ENCODE measurements at regions of chr17 and their contacts with region 1.

Region 1: DNA sequence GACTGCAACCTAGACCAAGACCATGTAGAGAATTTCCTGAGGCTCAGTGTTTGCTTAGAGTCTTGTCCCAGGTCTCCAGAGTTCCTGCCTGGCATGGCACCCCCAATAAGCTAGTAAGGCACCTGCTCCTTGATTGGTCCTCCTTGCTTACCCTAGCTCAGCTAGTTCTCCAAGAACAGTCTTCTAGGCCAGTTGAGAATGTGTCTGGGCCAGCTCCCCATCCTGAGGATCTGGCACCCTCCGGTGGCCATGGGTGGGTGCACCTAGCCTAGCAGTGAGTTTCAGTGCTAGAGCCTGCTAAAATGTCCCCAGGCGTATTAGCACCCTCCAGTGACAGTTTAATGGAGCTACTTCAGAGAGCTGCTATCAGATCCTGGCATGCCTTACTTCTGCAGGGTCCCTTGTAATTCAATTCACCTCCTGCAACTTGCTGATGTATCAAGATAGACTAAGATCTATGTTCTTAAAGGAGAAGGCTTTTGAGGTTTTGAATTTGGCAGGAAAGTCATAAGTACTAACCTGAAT is 44.4 kb upstream of the MED13 start:
- DNase-seq: peak; percentile 82
- ATAC-seq: peak; percentile 98
- H3K4me3 ChIP-seq: no peak overlapping the region
- H3K27ac ChIP-seq: no peak overlapping the region
- H3K4me1 ChIP-seq: peaks cover 4% of the 10 kb centered on the region; the same call in 1 of the 2 replicates
- H3K27me3 ChIP-seq: no peaks in the 10 kb centered on the region
- CTCF ChIP-seq: peak; percentile 90

Region 2: GRCh38 chr17:61770752-61771533 is 338.5 kb before region 1 on chr17:
- CTCF ChIA-PET with region 1: no interaction called
- POLR2A ChIA-PET with region 1: interaction called, 10 read pairs
- in situ Hi-C with region 1: no loop called
- intact Hi-C with region 1: no loop called
- DNase-seq: no peak
- ATAC-seq: no peak
- H3K4me3 ChIP-seq: no peak overlapping the region
- H3K27ac ChIP-seq: no peak overlapping the region
- H3K4me1 ChIP-seq: no peaks in the 10 kb centered on the region
- H3K27me3 ChIP-seq: no peaks in the 10 kb centered on the region
- CTCF ChIP-seq: no peak

Region 3: GRCh38 chr17:61833536-61834193 is 275.8 kb before region 1 on chr17:
- CTCF ChIA-PET with region 1: no interaction called
- POLR2A ChIA-PET with region 1: no interaction called
- in situ Hi-C with region 1: no loop called
- intact Hi-C with region 1: no loop called
- DNase-seq: peak; percentile 10
- ATAC-seq: peak; percentile 81
- H3K4me3 ChIP-seq: no peak overlapping the region
- H3K27ac ChIP-seq: no peak overlapping the region
- H3K4me1 ChIP-seq: peaks cover 12% of the 10 kb centered on the region; the same call in 1 of the 2 replicates
- H3K27me3 ChIP-seq: no peaks in the 10 kb centered on the region
- CTCF ChIP-seq: no peak

Region 4: DNA sequence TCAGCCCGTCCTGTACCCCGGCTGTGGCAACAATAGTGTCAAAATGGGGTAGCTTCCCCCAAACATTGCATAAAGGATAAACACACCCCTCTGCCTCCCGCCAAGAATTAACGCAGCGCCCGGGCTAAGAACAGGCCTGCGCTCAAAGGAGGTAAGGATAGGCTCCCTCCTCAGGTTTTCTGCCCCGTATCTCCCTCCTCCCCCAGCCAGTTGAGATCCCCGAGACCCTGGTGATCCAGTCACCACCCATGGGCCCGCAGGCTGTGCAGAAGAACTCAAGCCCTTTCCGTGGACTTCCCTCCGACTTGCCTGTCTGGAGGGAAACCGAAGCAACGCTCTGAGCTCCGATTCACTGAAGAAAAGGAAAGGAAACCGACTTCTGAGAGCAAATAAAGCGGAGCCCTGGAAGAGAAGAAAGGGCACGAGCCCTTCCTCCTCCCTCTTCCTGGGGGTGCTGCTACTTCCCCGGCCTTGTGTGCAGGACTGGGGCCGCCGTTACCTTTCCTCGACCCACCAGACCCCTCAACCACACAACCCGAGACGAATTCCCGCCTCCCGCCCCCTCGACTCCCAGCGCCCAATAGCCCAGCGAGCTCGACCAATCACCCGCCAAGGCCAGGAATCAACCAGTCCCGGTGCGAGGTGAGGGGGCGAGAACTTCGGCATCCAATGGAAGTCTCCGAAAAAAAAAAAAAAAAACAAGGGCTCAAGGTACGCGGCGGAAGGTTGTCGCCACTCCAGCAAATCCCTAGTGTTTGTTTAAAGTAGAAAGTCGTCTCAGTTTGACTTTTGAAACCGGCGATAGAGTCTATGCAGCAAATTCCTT is 246.3 kb before region 1 on chr17 and contains the start of gene BRIP1:
- CTCF ChIA-PET with region 1: interaction called, 20 read pairs
- POLR2A ChIA-PET with region 1: interaction called, 4 read pairs
- in situ Hi-C with region 1: no loop called
- intact Hi-C with region 1: no loop called
- DNase-seq: peak; percentile 66
- ATAC-seq: peak; percentile 100
- H3K4me3 ChIP-seq: peak within 1 kb of the TSS; percentile 65 to 93
- H3K27ac ChIP-seq: peak within 1 kb of the TSS; percentile 85
- H3K4me1 ChIP-seq: peaks cover 17% of the 10 kb centered on the region; the same call in 1 of the 2 replicates
- H3K27me3 ChIP-seq: no peaks in the 10 kb centered on the region
- CTCF ChIP-seq: no peak
- total RNA-seq, gene BRIP1: 9.4 TPM

Region 5: DNA sequence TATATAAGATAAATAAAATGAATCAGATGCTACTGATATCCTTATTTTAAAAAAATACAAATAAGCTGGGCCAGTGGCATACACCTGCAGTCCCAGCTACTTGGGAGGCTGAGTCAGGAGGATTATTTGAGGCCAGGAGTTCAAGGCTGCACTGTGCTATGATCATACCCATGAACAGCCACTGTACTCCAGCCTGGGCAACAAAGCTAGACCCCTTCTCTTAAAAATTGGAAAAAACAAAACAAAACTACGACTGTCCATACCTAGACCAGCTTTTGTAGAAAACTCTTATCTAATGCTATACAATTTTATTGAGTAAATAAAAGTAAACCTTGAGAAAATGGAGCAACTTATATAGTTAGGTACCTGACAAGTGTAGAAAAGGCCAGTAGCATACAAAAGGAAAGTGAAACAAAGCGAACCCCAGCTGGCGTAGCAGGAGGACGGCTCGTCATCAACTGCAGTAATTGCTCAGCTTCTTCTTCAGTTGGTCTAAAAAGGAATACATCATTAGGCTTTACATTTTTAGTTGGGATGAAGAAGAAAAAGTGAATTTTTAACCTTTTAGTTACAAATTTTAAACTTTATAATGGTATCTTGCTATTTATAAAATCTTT is 205.2 kb before region 1 on chr17:
- CTCF ChIA-PET with region 1: interaction called, 12 read pairs
- POLR2A ChIA-PET with region 1: no interaction called
- in situ Hi-C with region 1: no loop called
- intact Hi-C with region 1: no loop called
- DNase-seq: no peak
- ATAC-seq: no peak
- H3K4me3 ChIP-seq: no peak overlapping the region
- H3K27ac ChIP-seq: no peak overlapping the region
- H3K4me1 ChIP-seq: no peaks in the 10 kb centered on the region
- H3K27me3 ChIP-seq: no peaks in the 10 kb centered on the region
- CTCF ChIP-seq: no peak